ENCODE measurements at regions of chr2 and their contacts with region 1.

Region 1: GRCh38 chr2:218322895-218323808 is 30.8 kb upstream of the TMBIM1 start:
- DNase-seq: peak in 1 of 2 donors; percentile 78
- H3K4me3 ChIP-seq: peak overlapping the region; percentile 63 to 74
- H3K27ac ChIP-seq: peak overlapping the region; percentile 66 to 75
- H3K4me1 ChIP-seq: peaks cover 3 to 18% of the 10 kb centered on the region in 2 donors
- H3K27me3 ChIP-seq: no peaks in the 10 kb centered on the region
- CTCF ChIP-seq: no peak

Region 2: GRCh38 chr2:218343591-218343990 is 20.4 kb after region 1 on chr2:
- intact Hi-C with region 1: loop called (anchors 1 kb)
- DNase-seq: peak in 1 of 2 donors; percentile 90
- H3K4me3 ChIP-seq: no peak overlapping the region
- H3K27ac ChIP-seq: peak overlapping the region; percentile 86 to 96
- H3K4me1 ChIP-seq: peaks cover 17 to 33% of the 10 kb centered on the region in 2 donors
- H3K27me3 ChIP-seq: no peaks in the 10 kb centered on the region
- CTCF ChIP-seq: peak in 1 of 3 experiments; percentile 22